ENCODE measurements at regions of chr4 and their contacts with region 1.

Region 1: DNA sequence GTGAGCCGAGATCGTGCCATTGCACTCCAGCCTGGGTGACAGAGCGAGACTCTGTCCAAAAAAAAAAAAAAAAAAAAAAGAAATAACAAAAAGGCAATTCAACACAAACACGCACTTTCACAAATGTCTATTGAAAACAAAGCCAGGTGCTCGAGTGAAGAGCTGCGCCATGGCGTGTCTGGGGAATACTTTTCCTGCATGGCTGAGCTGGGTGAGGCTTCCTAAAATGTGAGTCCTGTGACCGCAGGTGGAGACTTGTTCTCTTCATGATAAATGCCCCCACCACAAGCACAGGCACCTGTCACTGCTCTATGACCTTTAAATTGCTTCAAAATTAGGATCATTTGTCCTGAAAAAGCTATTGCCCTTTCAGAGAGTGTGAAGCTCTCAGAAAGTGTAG is 4.0 kb upstream of the ABLIM2 start:
- DNase-seq: no peak

Region 2: GRCh38 chr4:7917662-7918061 is 245.0 kb before region 1 on chr4:
- intact Hi-C with region 1: no loop called
- DNase-seq: no peak

Region 3: DNA sequence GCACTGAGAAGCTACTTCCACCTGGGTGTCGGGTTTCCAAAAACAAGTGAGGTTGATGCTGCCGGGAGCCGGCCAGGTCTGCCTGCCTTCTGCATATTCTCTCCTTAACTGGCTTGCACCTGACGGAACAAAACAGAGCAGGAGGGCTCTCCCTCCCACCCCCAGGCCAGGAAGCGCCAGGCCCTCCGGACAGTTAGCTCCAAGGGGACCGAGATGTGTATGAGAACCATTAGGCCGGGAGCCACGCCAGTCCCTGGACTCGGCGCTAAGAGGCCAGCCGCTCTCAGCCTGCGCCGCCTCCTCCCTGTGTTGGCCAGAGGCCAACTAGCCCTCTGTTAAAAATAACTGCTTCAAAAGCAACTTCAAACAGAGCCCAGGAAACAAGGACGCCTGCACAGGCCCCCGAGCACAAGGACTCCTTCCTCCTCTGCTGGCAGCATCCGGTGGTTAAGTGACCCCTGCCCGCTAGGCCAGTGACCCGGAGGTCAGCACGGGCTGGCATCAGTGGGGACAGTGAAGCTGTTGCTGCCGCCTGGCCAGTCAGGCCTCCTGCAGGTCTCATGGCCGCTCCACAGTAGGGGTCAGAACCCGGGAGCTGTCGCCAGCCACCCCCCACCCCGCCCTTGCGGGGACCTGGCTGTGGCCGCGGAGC is 111.9 kb before region 1 on chr4:
- intact Hi-C with region 1: no loop called
- DNase-seq: peak; percentile 91

Region 4: DNA sequence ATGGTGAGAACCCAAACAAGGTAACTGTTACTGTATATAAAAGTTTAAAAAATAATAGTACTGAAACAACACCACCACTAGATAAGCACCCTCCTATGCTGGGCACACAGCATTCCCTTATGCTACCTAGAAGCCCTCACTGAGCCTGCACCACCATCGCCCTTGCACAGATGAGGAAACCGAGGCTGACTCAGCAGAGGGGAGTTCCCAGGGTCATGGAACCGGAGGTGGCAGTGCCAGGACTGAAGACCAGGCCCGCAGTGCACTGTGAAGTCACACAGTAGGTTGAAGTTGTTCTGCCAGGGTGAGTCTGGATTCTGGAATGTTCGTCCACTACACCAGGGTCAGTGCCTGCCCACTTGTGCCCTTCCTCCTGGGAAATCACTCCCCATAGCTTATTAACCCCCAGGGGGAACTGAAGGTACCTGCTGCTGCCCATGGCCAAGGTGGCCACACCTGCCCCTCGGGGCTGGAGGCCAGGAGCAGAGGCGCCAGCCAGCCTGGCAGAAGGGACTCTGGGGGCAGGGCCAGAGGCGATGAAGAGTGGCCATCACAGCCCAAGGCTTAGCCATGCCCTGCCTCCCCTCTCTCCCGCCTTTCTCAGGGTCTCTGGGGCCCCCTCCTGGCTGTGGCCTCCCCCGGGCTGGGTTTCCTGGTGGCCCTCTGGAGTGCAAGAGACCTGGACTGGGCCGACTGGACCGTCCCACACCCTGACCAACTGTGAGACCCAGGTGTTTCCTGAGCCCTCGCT is 11.0 kb after region 1 on chr4:
- intact Hi-C with region 1: no loop called
- DNase-seq: no peak

Region 5: GRCh38 chr4:8185930-8186329 is 23.3 kb after region 1 on chr4:
- intact Hi-C with region 1: loop called in 1 of 2 experiments (anchors 1 kb)
- DNase-seq: no peak

Measured in posterior vena cava (tissue), 2 donors.